PC-3 (cell line): ENCODE measurements at regions of chr9 and their contacts with region 1.

Region 1: GRCh38 chr9:108057421-108058134 is 568.0 kb upstream of the KLF4 start:
- DNase-seq: peak; percentile 88
- ATAC-seq: peak; percentile 90
- H3K4me3 ChIP-seq: no peak overlapping the region
- H3K27ac ChIP-seq: peak overlapping the region; percentile 98
- H3K4me1 ChIP-seq: peaks cover 28% of the 10 kb centered on the region
- H3K27me3 ChIP-seq: no peaks in the 10 kb centered on the region
- CTCF ChIP-seq: no peak

Region 2: DNA sequence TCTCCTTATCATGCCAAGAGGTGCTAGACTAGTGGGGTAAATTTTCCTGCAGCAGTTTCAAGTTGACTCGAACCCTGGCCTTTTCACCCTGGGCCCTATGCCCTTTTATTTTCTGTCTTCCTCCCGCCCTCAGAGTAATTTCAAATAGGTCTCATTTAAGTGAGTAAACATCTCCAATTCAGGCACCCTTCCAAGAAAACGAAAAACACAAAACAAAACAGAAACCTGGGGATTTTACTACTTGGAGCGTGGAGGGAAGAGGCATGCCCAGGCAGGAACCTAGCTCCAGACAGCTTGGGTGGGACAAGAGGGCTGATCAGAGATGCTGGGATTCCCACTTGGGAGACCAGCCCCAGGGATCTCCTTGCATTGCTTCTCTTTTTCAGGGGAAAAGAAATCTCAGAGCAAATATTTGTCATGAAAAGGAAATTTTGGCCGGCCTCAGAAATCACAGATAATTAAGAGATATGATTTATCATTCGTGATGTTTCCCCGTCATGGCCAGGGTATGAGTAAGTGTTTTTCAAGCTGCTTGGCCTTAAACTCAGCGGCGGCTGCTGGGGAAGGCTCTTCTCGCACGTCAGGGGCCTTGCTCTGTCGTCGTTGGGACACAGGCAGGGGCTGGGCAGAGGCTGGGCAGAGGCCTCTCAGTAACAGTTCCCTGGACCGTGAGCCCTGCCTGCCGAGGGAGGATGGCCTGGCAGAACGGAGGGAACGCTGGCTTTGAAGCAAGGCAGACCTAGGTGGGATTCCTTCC is 319.4 kb before region 1 on chr9:
- CTCF ChIA-PET with region 1: no interaction called
- POLR2A ChIA-PET with region 1: no interaction called
- intact Hi-C with region 1: loop called (anchors 5 kb)
- DNase-seq: peak; percentile 56
- ATAC-seq: peak; percentile 64
- H3K4me3 ChIP-seq: no peak overlapping the region; the same call in 1 of the 2 replicates
- H3K27ac ChIP-seq: peak overlapping the region; percentile 98
- H3K4me1 ChIP-seq: peaks cover 45% of the 10 kb centered on the region
- H3K27me3 ChIP-seq: no peaks in the 10 kb centered on the region
- CTCF ChIP-seq: no peak

Region 3: GRCh38 chr9:107794259-107794658 is 263.3 kb before region 1 on chr9:
- CTCF ChIA-PET with region 1: no interaction called
- POLR2A ChIA-PET with region 1: no interaction called
- intact Hi-C with region 1: loop called (anchors 1 kb)
- DNase-seq: peak; percentile 22
- ATAC-seq: peak; percentile 96
- H3K4me3 ChIP-seq: no peak overlapping the region
- H3K27ac ChIP-seq: no peak overlapping the region
- H3K4me1 ChIP-seq: peaks cover 6% of the 10 kb centered on the region
- H3K27me3 ChIP-seq: no peaks in the 10 kb centered on the region
- CTCF ChIP-seq: no peak

Region 4: DNA sequence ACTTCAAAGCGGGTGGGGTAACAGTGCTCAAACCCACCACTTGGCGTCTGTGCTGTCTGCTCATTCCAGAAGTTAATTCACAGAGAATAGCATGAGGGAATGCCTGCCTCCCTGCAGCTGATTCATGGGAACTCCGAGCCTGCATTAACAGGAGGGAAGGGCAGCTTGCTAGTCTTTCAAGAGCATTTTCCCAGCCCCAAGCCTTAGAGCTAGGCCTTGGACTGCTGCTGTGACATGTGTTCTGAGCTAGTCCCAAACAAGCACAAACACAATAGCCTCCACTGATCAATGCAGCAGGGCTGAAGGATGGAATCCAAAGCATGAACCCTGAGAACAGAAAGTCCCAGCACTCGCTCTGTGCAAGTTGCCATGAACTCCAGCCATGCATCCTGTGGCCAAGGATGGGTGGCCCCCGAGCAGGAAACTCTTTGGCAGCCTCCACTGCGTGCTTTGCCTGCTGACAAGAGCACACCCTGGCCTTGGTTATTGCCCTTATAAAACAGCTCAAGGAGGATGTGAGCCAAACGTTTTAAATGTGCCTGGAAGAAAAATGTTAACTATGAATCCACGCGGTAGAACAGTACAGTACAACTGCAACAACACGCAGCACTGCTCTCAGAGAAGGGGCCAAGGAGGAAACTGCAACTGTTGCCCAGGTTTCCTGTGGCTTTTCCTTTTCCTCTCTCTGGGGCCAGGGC is 85.1 kb after region 1 on chr9:
- CTCF ChIA-PET with region 1: no interaction called
- POLR2A ChIA-PET with region 1: no interaction called
- intact Hi-C with region 1: loop called (anchors 2 kb)
- DNase-seq: no peak
- ATAC-seq: peak; percentile 95
- H3K4me3 ChIP-seq: no peak overlapping the region
- H3K27ac ChIP-seq: no peak overlapping the region
- H3K4me1 ChIP-seq: no peaks in the 10 kb centered on the region
- H3K27me3 ChIP-seq: no peaks in the 10 kb centered on the region
- CTCF ChIP-seq: no peak